Mucosa of descending colon (tissue), 3 donors: ENCODE measurements at regions of chr2 and their contacts with region 1.

Region 1: DNA sequence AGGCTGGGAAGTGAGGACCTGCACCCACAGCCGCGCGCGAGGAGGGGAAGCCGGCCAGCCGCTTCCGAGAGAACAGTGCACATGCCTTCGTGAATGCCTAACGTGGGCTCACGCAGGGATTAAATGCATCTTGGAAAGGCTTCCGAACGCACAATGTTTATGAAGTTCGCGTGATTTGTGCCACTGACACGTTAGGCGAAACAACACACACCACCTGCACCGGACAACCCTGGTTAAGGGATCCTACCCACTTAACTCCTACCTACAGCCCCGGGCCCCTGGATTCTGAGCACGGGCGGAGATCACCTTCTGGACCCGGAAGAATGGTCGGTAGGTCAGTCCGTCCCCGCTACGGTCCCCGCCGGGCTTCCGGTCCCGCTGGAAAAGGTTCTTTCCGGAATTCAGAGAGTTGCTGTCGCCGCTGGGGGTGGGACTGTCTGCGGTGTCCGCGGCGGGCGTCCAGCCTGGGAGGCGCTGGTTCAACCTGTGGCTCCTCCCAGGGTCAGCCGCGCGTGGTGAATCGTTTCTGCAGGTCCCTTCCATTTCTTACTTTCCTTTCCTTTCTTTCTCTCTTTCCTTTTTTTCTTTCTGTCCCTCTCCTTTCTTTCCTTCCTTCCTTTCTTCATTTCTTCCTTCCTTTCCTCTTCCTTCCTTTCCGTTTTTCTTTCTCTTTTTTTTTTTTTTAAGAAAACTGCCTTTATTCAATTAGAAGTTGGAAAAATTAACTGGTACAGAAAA is at the start of gene MTIF2:
- DNase-seq: peak; percentile 96 to 98 (median 98)
- ATAC-seq: peak; percentile 99
- H3K4me3 ChIP-seq: peak within 1 kb of the TSS; percentile 47
- H3K4me1 ChIP-seq: peaks cover 8% of the 10 kb centered on the region
- CTCF ChIP-seq: no peak
- total RNA-seq, gene MTIF2: 33.5 to 46.8 (median 39.9) TPM

Region 2: DNA sequence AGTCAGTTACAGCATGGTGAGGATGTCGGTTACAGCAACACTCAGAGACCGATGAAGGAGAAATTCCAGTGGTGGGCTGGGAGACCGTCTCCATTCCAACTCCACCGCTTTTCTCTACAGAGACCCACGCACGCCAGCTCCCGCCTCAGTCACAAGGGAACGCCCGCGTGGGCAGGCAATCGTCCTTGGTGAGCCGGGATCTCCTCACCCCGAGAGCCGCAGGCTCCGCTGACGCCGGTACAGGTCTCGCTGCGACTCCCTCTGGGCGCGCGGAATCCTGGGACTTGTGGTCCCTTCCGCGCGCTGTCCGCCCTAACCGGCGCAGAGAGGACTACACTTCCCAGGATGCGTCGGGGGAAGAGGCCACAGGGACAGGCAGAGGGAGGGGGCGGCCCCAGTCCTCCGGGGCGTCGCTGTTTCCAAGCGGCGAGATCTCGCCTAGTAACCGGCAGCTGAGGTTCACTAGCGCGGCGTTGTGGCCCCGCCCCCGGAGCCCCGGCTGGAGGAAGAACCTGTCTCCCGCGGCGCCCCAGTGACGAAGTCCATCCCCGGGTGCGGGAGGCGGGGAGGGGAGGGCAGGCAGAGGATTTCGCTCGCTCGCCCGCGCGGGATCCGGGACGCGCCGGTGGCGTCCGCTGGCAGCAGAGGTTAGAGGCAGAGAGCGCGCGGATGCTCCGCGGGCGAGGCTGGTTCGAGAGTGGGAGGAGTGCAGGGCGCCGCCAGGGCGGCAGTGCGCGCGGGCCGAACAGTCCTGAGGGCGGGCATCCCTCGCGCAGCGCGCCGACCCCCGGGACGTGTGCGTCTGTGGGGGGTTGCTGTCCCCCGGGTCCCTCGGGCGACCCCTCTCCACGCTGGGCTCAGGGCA is 545.7 kb before region 1 on chr2 and contains the start of gene EML6:
- intact Hi-C with region 1: no loop called
- DNase-seq: peak; percentile 99
- ATAC-seq: peak; percentile 98
- H3K4me3 ChIP-seq: peak within 1 kb of the TSS; percentile 58
- H3K4me1 ChIP-seq: peaks cover 10% of the 10 kb centered on the region
- CTCF ChIP-seq: no peak
- total RNA-seq, gene EML6: 3.4 to 7.3 (median 5.3) TPM

Region 3: DNA sequence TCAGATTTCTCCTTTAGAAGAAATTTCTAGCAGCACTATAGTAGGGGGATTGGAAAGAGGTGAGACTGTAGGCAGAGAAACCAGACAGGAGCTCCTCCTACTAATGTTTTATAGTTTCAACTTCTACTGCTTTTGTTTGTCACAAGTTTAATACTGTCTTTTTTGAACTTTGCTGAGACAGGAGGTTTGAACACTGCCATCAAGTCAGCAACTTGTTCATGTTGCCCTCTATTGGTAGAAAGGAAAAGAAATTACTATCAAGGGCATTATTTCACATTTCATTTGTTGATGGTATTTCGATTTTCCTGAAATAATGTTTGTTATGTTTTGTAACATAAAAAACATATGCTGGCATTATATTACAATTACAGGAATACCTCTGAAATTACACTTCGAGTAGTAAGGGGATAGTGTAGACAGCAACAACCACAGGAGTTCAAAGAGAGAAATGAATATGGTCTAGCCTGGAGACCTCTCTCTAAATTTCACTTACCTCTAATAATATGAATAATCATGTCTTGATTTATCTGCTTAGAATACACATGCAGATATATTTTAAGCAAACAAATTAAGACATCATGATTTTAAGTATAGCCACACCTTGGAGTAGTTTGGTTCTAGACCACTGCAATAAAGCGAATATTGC is 163.0 kb after region 1 on chr2:
- intact Hi-C with region 1: loop called in 1 of 2 experiments (anchors 10 kb)
- DNase-seq: no peak
- ATAC-seq: peak; percentile 44
- H3K4me3 ChIP-seq: no peak overlapping the region
- H3K4me1 ChIP-seq: no peaks in the 10 kb centered on the region
- CTCF ChIP-seq: no peak